ENCODE measurements at regions of chr16 and their contacts with region 1.

Region 1: DNA sequence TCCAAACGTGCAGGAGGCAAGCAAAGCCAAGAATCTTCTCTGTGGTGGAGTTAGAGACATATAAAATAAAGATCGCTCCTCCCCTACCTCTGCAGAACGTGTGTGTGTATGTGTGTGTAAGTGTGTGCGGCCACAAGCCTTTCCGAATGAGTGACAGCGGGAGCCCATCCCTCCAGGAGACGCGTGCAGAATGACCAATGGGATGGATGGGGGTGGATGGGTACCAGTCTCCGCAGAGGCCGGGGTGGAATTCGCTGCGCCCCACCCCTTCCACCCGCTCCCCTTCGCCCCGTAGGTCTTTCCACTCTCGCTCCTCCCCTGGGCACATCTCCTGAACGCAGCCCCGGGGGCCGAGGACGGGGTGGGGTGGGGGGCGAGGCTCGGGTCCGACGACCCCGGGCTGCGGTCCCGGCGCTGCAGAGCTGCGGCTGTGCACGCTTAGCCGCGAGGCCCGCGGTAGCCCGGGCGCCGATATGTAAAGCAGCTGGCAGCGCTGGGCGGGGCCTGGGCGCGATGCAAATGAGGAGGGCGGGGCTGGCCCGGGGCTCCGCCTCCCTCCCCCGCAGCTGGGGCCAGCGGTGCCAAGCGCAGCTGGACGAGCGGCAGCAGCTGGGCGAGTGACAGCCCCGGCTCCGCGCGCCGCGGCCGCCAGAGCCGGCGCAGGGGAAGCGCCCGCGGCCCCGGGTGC is at the start of gene PRKCB:
- DNase-seq: peak; percentile 98
- H3K4me3 Mint-ChIP-seq: peak within 1 kb of the TSS; percentile 94
- H3K27ac Mint-ChIP-seq: peak within 1 kb of the TSS; percentile 82
- H3K4me1 Mint-ChIP-seq: peaks cover 56% of the 10 kb centered on the region
- H3K27me3 Mint-ChIP-seq: no peaks in the 10 kb centered on the region
- total RNA-seq, gene PRKCB: 79.9 and 84.2 TPM in 2 replicates

Region 2: DNA sequence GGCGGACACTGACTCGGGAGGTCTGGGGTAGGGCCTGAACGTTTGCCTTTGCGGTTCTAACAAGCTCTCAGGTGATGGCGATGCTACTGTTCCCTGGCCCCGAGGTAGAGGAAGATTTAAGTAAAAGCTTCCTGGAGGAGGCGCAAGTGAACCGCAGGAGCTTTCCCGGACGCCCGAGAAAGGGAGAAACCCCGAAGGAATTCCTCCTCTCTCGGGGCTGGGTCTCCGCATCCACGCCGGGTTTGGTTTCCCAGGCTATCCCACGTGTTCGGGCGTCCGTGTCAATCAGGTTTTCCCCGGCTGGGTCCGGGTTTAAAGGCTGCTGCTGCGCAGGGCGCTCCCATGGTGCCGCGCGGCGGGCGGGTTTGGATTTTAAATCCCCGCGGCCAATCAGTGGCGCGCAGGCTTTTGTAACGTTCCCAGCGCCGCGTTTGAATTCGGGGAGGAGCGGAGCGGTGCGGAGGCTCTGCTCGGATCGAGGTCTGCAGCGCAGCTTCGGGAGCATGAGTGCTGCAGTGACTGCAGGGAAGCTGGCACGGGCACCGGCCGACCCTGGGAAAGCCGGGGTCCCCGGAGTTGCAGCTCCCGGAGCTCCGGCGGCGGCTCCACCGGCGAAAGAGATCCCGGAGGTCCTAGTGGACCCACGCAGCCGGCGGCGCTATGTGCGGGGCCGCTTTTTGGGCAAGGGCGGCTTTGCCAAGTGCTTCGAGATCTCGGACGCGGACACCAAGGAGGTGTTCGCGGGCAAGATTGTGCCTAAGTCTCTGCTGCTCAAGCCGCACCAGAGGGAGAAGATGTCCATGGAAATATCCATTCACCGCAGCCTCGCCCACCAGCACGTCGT is 156.9 kb before region 1 on chr16 and contains the start of gene PLK1:
- intact Hi-C with region 1: no loop called
- DNase-seq: peak; percentile 96
- H3K4me3 Mint-ChIP-seq: peak within 1 kb of the TSS; percentile 92
- H3K27ac Mint-ChIP-seq: peak within 1 kb of the TSS; percentile 85
- H3K4me1 Mint-ChIP-seq: peaks cover 36% of the 10 kb centered on the region
- H3K27me3 Mint-ChIP-seq: no peaks in the 10 kb centered on the region
- total RNA-seq, gene PLK1: 45.7 and 51.7 TPM in 2 replicates

Region 3: GRCh38 chr16:24010440-24011089 is 175.0 kb after region 1 on chr16:
- intact Hi-C with region 1: loop called (anchors 2 kb)
- DNase-seq: peak; percentile 93
- H3K4me3 Mint-ChIP-seq: no peak overlapping the region
- H3K27ac Mint-ChIP-seq: no peak overlapping the region
- H3K4me1 Mint-ChIP-seq: peaks cover 54% of the 10 kb centered on the region
- H3K27me3 Mint-ChIP-seq: no peaks in the 10 kb centered on the region

Region 4: DNA sequence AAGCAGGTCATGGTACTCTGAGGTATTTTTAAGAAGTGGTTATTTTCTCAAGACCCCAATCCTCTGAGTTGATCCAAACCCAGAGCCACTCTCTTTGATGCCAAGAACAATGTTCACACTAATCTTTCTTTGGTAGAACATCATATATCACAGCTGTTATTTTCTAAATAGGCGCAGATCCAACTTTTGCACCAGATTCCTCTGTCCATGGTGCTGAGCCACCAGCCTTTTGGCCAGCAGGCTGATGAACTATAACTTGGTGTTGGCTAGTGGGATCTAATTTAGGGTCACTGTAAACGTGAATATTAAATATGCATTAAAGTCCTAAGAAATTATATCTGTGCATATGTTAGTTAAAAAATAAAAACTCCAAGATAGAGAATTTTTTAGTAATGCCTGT is 1429.1 kb after region 1 on chr16:
- intact Hi-C with region 1: no loop called
- DNase-seq: peak; percentile 65
- H3K4me3 Mint-ChIP-seq: no peak overlapping the region
- H3K27ac Mint-ChIP-seq: no peak overlapping the region
- H3K4me1 Mint-ChIP-seq: peaks cover 23% of the 10 kb centered on the region
- H3K27me3 Mint-ChIP-seq: no peaks in the 10 kb centered on the region